Vagina (tissue), 2 donors: ENCODE measurements at regions of chr7 and their contacts with region 1.

Region 1: DNA sequence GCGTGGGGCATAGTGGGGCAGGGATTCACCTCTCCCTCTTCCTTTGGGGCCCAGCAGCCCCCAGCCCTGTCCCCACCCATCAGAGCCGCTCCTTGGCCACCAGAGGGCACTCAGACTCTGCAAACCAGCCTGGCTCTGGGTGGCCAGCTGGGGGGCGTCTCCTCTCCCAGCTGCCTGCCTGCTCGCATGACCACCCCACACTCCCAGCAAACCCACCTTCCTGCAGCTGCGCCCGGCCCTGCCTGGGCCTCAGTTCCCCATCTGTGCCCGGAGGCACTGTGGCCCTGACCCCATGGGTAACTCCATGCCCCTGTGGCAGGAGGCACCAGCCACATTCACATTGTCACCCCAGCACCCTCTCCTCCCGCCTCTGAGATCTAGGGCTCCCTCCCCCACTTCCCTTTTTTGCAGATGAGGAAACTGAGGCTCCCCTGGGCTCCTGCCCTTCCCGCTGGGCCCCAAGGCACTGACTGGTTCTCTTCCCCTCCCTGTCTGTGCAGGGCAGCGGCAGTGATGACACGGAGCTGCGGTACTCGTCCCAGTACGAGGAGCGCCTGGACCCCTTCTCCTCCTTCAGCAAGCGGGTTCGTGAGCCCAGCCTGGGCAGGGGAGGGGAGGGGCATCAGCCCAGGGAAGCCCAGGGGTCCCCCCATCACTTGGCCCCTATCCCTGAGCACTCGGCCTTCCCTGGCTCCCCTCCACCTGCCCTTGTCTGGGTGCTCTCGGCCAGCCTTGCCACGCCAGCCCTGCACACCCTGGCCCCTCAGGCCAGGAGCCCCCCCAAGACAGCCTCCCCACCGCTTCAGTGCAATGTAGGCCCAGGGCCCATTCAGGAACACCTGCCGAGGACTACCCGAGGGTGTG is 6.9 kb upstream of the SH2B2 start:
- DNase-seq: no peak
- H3K4me3 ChIP-seq: no peak overlapping the region
- H3K27ac ChIP-seq: no peak overlapping the region
- H3K4me1 ChIP-seq: peaks cover 2% of the 10 kb centered on the region
- H3K27me3 ChIP-seq: no peaks in the 10 kb centered on the region
- CTCF ChIP-seq: peak; percentile 82 to 94 (median 85)
- POLR2A ChIP-seq: no peak

Region 2: GRCh38 chr7:102390697-102391484 is 111.1 kb after region 1 on chr7:
- intact Hi-C with region 1: loop called (anchors 5 kb)
- DNase-seq: no peak
- H3K4me3 ChIP-seq: no peak overlapping the region
- H3K27ac ChIP-seq: no peak overlapping the region
- H3K4me1 ChIP-seq: peaks cover 11% of the 10 kb centered on the region
- H3K27me3 ChIP-seq: no peaks in the 10 kb centered on the region
- CTCF ChIP-seq: peak; percentile 67 to 83 (median 77)
- POLR2A ChIP-seq: no peak